Mammary epithelial cell (primary cell): ENCODE measurements at regions of chr7 and their contacts with region 1.

Region 1: DNA sequence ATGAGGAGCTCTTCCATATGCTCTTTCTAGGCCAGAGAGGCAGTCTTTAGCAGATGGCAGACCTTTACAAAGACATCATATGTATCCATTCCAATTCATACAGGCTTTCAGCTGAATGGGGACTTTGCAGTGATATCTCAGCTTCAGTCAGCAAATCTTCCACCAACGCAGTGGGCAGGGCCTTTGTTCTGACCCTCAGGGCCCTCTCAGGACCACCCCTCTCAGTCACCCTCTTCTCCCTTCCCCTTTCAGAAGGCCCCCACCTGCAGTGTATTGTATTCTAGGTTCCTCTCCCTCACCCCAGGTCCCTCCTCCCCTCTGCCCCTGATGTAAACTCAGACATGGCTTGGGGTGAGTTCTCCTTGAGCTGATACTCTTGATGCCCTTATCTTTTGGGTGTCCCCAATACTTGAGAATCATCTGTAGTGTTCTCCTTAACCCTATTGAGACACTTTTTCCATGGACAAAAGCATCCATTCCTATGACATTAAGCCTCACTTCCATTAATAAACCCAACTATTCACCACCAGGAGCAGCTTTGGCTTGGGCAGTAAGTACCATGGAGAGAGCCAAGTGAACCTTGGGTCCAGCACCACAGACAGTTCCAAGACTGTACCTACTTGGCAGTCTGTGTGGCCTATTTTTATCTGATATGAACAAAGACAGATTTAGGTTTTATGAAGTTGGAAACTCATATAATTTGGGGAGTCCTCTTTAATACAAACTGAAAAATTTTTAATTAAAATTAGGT is 62.7 kb downstream of the ADCYAP1R1 start:
- DNase-seq: peak; percentile 25
- H3K4me3 ChIP-seq: no peak overlapping the region
- H3K27ac ChIP-seq: no peak overlapping the region
- H3K4me1 ChIP-seq: no peaks in the 10 kb centered on the region
- H3K27me3 ChIP-seq: peaks cover 5% of the 10 kb centered on the region
- CTCF ChIP-seq: no peak

Region 2: DNA sequence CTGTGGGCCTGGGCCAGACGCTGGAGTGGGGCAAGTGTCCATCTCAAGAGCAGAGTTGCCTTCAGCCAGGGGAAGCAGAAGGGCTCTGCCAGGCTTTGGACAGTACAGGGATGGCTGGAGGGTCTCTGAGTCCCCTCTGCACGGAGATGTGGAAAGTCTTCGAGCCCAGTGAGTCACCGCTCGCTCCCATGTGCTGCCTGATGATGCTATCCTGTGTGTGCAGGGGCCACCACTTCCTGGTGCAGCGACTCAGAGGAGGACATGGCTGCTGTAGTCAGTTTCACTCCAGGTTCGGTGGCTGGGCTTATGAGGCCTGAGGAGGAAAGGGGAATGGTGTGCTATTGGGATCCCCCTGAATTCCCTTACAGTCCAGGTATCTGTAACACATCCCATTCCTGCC is 56.6 kb before region 1 on chr7:
- CTCF ChIA-PET with region 1: no interaction called
- dilution Hi-C with region 1: loop called (anchors 5 kb)
- in situ Hi-C with region 1: no loop called
- intact Hi-C with region 1: no loop called
- DNase-seq: peak; percentile 20
- H3K4me3 ChIP-seq: no peak overlapping the region
- H3K27ac ChIP-seq: no peak overlapping the region
- H3K4me1 ChIP-seq: no peaks in the 10 kb centered on the region
- H3K27me3 ChIP-seq: peaks cover 3% of the 10 kb centered on the region
- CTCF ChIP-seq: no peak